Activated CD8-positive, alpha-beta T cell treated with anti-CD3 and anti-CD28 coated beads, Interleukin-2, amount 10 ng/mL, durations not matched to agents 7 days and 5 days (primary cell): ENCODE measurements at regions of chr2 and their contacts with region 1.

Region 1: GRCh38 chr2:237744613-237745249 is 53.8 kb upstream of the RBM44 start:
- DNase-seq: peak; percentile 78
- ATAC-seq: peak; percentile 84
- H3K4me3 Mint-ChIP-seq: no peak overlapping the region
- H3K27ac Mint-ChIP-seq: peak overlapping the region; percentile 52
- H3K4me1 Mint-ChIP-seq: peaks cover 24% of the 10 kb centered on the region
- H3K27me3 Mint-ChIP-seq: no peaks in the 10 kb centered on the region

Region 2: GRCh38 chr2:237572021-237572741 is 172.6 kb before region 1 on chr2:
- CTCF ChIA-PET with region 1: interaction called, 10 read pairs
- POLR2A ChIA-PET with region 1: no interaction called
- DNase-seq: peak; percentile 89
- ATAC-seq: peak; percentile 98
- H3K4me3 Mint-ChIP-seq: no peak overlapping the region
- H3K27ac Mint-ChIP-seq: no peak overlapping the region
- H3K4me1 Mint-ChIP-seq: peaks cover 5% of the 10 kb centered on the region
- H3K27me3 Mint-ChIP-seq: no peaks in the 10 kb centered on the region

Region 3: GRCh38 chr2:237603718-237604362 is 140.9 kb before region 1 on chr2:
- CTCF ChIA-PET with region 1: interaction called, 13 read pairs
- POLR2A ChIA-PET with region 1: no interaction called
- DNase-seq: peak; percentile 77
- ATAC-seq: peak; percentile 98
- H3K4me3 Mint-ChIP-seq: peak overlapping the region; percentile 47
- H3K27ac Mint-ChIP-seq: peak overlapping the region; percentile 87
- H3K4me1 Mint-ChIP-seq: peaks cover 21% of the 10 kb centered on the region
- H3K27me3 Mint-ChIP-seq: peaks cover 7% of the 10 kb centered on the region

Region 4: GRCh38 chr2:237691908-237692600 is 52.7 kb before region 1 on chr2:
- CTCF ChIA-PET with region 1: interaction called, 24 read pairs
- POLR2A ChIA-PET with region 1: interaction called, 4 read pairs
- DNase-seq: peak; percentile 95
- ATAC-seq: peak; percentile 70
- H3K4me3 Mint-ChIP-seq: peak overlapping the region; percentile 93
- H3K27ac Mint-ChIP-seq: peak overlapping the region; percentile 93
- H3K4me1 Mint-ChIP-seq: peaks cover 55% of the 10 kb centered on the region
- H3K27me3 Mint-ChIP-seq: no peaks in the 10 kb centered on the region

Region 5: DNA sequence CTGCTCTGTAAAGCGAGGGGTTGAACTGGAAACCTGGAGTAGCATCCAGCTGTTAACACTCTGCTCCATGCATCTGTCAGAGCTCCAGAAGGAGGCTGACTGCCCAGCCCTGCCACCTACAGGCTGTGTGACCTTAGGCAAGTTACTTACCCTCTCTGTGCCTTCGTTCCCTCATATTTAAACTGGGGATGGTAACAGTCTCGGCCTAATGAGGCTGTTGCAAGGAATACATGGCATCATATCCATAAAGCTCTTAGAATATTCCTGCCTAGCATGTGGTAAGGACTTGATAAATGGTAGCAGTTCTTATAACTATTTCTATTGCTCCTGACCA is 36.7 kb before region 1 on chr2:
- CTCF ChIA-PET with region 1: interaction called, 25 read pairs
- POLR2A ChIA-PET with region 1: no interaction called
- DNase-seq: no peak
- ATAC-seq: no peak
- H3K4me3 Mint-ChIP-seq: no peak overlapping the region
- H3K27ac Mint-ChIP-seq: no peak overlapping the region
- H3K4me1 Mint-ChIP-seq: peaks cover 59% of the 10 kb centered on the region
- H3K27me3 Mint-ChIP-seq: no peaks in the 10 kb centered on the region

Region 6: GRCh38 chr2:237731663-237732062 is 13.1 kb before region 1 on chr2:
- CTCF ChIA-PET with region 1: interaction called, 68 read pairs
- POLR2A ChIA-PET with region 1: no interaction called
- DNase-seq: no peak
- ATAC-seq: peak; percentile 34
- H3K4me3 Mint-ChIP-seq: no peak overlapping the region
- H3K27ac Mint-ChIP-seq: peak overlapping the region; percentile 60
- H3K4me1 Mint-ChIP-seq: peaks cover 37% of the 10 kb centered on the region
- H3K27me3 Mint-ChIP-seq: no peaks in the 10 kb centered on the region